GM18951 (cell line): ENCODE measurements at regions of chr11 and their contacts with region 1.

Region 1: DNA sequence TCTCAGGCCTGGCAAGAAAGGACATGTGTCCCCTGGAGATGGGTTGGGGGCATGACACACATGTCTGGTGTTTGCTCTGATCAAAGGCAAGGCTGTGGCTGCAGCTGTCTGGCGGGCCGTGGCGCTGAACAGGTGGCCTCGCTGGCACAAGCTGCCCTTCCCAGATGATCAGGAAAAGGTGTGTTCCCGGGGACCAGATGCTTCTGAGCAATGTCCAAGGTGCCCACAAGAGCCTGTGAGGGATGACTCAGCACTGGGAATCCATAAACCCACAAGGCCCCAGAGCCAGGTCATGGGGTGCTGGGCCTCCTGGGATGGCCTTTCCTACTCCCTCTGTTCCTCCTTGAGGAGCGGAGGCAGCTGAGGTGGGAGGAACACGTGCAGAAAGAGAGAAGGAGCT is 9.7 kb upstream of the LRP5 start:
- POLR2A ChIP-seq: no peak

Region 2: GRCh38 chr11:68257475-68258362 is 45.0 kb before region 1 on chr11:
- in situ Hi-C with region 1: loop called (anchors 5 kb)
- POLR2A ChIP-seq: peak; percentile 4

Region 3: DNA sequence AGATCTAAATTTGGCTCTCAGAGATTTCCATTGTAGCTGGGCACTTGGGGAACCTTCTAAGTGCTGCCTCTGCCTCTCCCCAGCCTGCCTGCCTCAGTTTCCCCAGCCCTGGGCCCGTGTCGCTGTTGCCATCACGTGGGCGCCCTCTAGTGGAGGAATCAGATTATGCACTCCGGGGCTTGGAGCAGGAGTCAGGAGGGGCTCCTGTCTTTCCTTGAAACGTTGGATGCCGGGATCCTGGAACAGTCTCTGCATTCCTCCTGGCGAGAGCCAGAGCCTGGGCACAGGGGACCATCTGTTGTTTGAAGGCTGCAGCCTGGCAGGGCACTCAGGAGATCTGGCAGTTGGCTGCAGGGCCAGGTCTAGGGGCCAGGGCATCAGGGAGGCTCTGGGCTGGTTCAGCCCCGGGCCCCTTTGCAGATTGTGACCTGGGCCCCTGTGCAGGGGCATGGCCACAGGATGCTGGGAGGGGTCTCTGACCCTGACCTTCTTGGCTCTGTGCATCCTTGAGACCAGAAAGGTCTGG is 81.4 kb after region 1 on chr11:
- in situ Hi-C with region 1: loop called (anchors 5 kb)
- POLR2A ChIP-seq: no peak